ENCODE measurements at regions of chr3 and their contacts with region 1.

Region 1: GRCh38 chr3:4845882-4846281 is 133.4 kb upstream of the BHLHE40 start:
- DNase-seq: no peak
- ATAC-seq: peak; percentile 65
- H3K4me3 Mint-ChIP-seq: peak overlapping the region; percentile 36
- H3K27ac Mint-ChIP-seq: peak overlapping the region; percentile 87
- H3K4me1 Mint-ChIP-seq: peaks cover 97% of the 10 kb centered on the region
- H3K27me3 Mint-ChIP-seq: no peaks in the 10 kb centered on the region

Region 2: GRCh38 chr3:4826237-4827100 is 19.4 kb before region 1 on chr3:
- CTCF ChIA-PET with region 1: interaction called, 22 read pairs
- POLR2A ChIA-PET with region 1: interaction called, 250 read pairs
- DNase-seq: no peak
- ATAC-seq: no peak
- H3K4me3 Mint-ChIP-seq: peak overlapping the region; percentile 78
- H3K27ac Mint-ChIP-seq: peak overlapping the region; percentile 86
- H3K4me1 Mint-ChIP-seq: peaks cover 94% of the 10 kb centered on the region
- H3K27me3 Mint-ChIP-seq: no peaks in the 10 kb centered on the region

Region 3: DNA sequence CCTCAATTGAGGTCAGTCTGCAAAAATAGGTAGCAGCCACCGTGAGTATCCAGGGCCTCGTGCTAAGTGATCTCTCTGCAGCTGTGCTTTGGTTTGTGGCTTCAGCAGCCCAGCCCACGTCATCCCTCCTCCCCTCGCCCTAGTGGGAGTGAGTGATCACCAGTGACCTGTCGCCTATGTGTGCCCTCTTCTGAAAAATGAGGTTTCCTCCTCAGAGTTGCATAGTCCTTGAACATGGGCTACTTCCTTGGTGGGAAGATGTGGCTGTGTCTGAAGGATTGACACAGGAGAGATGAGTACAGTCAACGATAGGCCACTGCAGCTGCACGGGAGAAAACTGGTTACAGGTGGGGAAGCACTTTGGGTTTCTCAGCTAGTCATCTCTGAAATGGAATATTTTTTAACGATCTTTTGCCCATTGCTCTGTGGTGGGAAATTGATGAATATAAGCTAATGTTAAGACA is 11.4 kb before region 1 on chr3:
- CTCF ChIA-PET with region 1: interaction called, 53 read pairs
- POLR2A ChIA-PET with region 1: interaction called, 250 read pairs
- DNase-seq: peak; percentile 89
- ATAC-seq: peak; percentile 59
- H3K4me3 Mint-ChIP-seq: peak overlapping the region; percentile 65
- H3K27ac Mint-ChIP-seq: peak overlapping the region; percentile 92
- H3K4me1 Mint-ChIP-seq: peaks cover 91% of the 10 kb centered on the region
- H3K27me3 Mint-ChIP-seq: no peaks in the 10 kb centered on the region

Region 4: DNA sequence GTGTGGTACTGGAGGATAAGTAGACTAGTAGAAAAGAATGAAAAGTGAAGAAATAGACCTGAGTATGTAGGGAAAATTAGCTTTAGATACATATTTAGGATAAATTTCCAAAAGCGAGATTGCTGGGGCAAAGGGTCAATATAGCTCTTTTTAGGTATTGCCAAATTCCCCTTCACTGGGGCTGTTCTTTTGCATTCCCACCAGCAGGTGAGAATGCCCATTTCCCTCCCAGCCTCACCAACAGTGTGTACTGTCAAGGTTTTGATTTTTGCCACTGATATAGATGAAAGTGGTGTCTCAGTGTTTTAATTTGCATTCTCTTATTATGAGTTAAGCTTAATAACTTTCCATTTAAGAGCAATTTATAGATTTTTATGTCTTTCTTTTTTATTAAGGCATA is 97.7 kb after region 1 on chr3:
- CTCF ChIA-PET with region 1: no interaction called
- POLR2A ChIA-PET with region 1: no interaction called
- DNase-seq: no peak
- ATAC-seq: no peak
- H3K4me3 Mint-ChIP-seq: no peak overlapping the region
- H3K27ac Mint-ChIP-seq: no peak overlapping the region
- H3K4me1 Mint-ChIP-seq: no peaks in the 10 kb centered on the region
- H3K27me3 Mint-ChIP-seq: no peaks in the 10 kb centered on the region